GM12878 (cell line): ENCODE measurements at regions of chr1 and their contacts with region 1.

Region 1: DNA sequence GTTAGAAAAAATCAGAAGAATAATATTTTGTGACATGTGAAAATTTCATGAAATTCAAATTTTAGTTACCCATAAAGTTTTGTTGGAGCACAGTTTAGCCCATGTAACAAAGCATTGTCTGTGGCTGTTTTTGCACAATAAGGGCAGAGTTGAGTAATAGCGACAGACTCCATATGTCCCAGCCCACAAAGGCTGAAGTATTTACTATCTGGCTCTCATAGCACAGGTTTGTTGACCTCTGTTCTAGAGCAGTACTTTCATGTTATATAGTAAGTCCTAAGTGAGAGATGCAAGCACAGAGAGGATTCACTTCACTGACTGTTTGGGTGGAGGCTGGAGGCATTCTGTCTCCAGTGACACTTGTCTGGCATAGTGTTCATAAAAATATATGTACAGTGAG is 6.8 kb downstream of the LAMC1 start:
- DNase-seq: no peak
- ATAC-seq: peak; percentile 30
- H3K4me3 ChIP-seq: no peak overlapping the region
- H3K27ac ChIP-seq: no peak overlapping the region
- H3K4me1 ChIP-seq: peaks cover 36% of the 10 kb centered on the region
- H3K27me3 ChIP-seq: no peaks in the 10 kb centered on the region
- CTCF ChIP-seq: no peak
- EP300 ChIP-seq: no peak
- POLR2A ChIP-seq: no peak
- RAD21 ChIP-seq: no peak

Region 2: GRCh38 chr1:182952677-182953431 is 77.2 kb before region 1 on chr1 and contains the start of gene SHCBP1L:
- CTCF ChIA-PET with region 1: no interaction called
- POLR2A ChIA-PET with region 1: no interaction called
- RAD21 ChIA-PET with region 1: no interaction called
- SMC1A ChIA-PET with region 1: no interaction called
- in situ Hi-C with region 1: no loop called
- intact Hi-C with region 1: no loop called
- DNase-seq: no peak
- ATAC-seq: no peak
- H3K4me3 ChIP-seq: no peak within 1 kb of the TSS
- H3K27ac ChIP-seq: no peak within 1 kb of the TSS
- H3K4me1 ChIP-seq: no peaks in the 10 kb centered on the region
- H3K27me3 ChIP-seq: no peaks in the 10 kb centered on the region; a peak in 1 of 4 replicates
- CTCF ChIP-seq: no peak
- EP300 ChIP-seq: no peak
- POLR2A ChIP-seq: no peak
- RAD21 ChIP-seq: no peak
- polyA plus RNA-seq, gene SHCBP1L: not detected

Region 3: GRCh38 chr1:183048087-183049085 is 18.3 kb after region 1 on chr1:
- CTCF ChIA-PET with region 1: interaction called, 16 read pairs
- POLR2A ChIA-PET with region 1: interaction called, 5 read pairs
- RAD21 ChIA-PET with region 1: interaction called, 64 read pairs
- SMC1A ChIA-PET with region 1: interaction called, 80 read pairs
- in situ Hi-C with region 1: no loop called
- intact Hi-C with region 1: loop called (anchors 2 kb)
- DNase-seq: peak; percentile 78
- ATAC-seq: peak; percentile 98
- H3K4me3 ChIP-seq: no peak overlapping the region
- H3K27ac ChIP-seq: peak overlapping the region; percentile 46
- H3K4me1 ChIP-seq: peaks cover 29% of the 10 kb centered on the region
- H3K27me3 ChIP-seq: no peaks in the 10 kb centered on the region
- CTCF ChIP-seq: no peak
- EP300 ChIP-seq: peak in 1 of 2 experiments; percentile 61; a peak in 1 of 4 replicates
- POLR2A ChIP-seq: no peak
- RAD21 ChIP-seq: no peak

Region 4: GRCh38 chr1:183101841-183102276 is 71.8 kb after region 1 on chr1:
- CTCF ChIA-PET with region 1: interaction called, 5 read pairs
- POLR2A ChIA-PET with region 1: no interaction called
- RAD21 ChIA-PET with region 1: interaction called, 5 read pairs
- SMC1A ChIA-PET with region 1: interaction called, 4 read pairs
- in situ Hi-C with region 1: no loop called
- intact Hi-C with region 1: loop called (anchors 2 kb)
- DNase-seq: no peak
- ATAC-seq: peak; percentile 90
- H3K4me3 ChIP-seq: no peak overlapping the region
- H3K27ac ChIP-seq: no peak overlapping the region
- H3K4me1 ChIP-seq: peaks cover 8% of the 10 kb centered on the region; the same call in 1 of the 2 replicates
- H3K27me3 ChIP-seq: no peaks in the 10 kb centered on the region
- CTCF ChIP-seq: no peak
- EP300 ChIP-seq: no peak
- POLR2A ChIP-seq: no peak
- RAD21 ChIP-seq: no peak